Right cardiac atrium (tissue), 5 donors: ENCODE measurements at regions of chr20 and their contacts with region 1.

Region 1: GRCh38 chr20:13105864-13106457 is 97.2 kb downstream of the SPTLC3 start:
- DNase-seq: no peak
- ATAC-seq: no peak
- H3K4me3 ChIP-seq: no peak overlapping the region
- H3K27ac ChIP-seq: no peak overlapping the region
- H3K4me1 ChIP-seq: no peaks in the 10 kb centered on the region
- H3K27me3 ChIP-seq: no peaks in the 10 kb centered on the region

Region 2: DNA sequence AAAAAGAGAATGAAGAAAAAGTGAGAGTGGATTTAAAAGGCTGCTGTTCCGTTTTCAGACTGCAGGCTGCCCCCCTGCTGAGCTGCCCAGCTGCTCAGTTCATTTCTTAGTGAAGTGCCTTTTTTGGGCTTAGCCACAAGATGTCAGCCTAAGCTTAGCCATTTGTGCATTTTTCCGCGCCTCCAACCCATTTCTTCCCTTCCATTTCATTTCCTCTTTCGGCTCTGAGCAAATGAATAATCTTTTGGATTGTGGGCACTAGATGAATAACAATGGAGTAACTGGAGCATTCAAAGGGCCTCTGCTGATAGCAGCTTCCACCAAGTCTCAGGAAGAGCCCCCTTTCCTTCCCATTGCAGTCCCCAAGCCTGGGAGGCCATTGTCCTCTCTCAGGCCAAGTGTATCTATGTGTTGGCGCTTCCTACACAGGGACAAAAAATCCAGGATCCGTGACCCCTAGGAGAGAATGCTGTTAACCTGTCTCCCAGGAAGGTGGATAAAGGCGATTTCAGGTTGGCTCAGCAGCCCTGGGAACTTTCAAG is 180.7 kb before region 1 on chr20:
- intact Hi-C with region 1: loop called in 1 of 4 experiments (anchors 5 kb)
- DNase-seq: peak; percentile 32 to 58 (median 55)
- ATAC-seq: peak; percentile 84 to 88
- H3K4me3 ChIP-seq: no peak overlapping the region
- H3K27ac ChIP-seq: no peak overlapping the region
- H3K4me1 ChIP-seq: no peaks in the 10 kb centered on the region
- H3K27me3 ChIP-seq: no peaks in the 10 kb centered on the region

Region 3: GRCh38 chr20:12970372-12970821 is 135.6 kb before region 1 on chr20:
- intact Hi-C with region 1: loop called (anchors 2 to 10 kb)
- DNase-seq: no peak
- ATAC-seq: peak; percentile 34 to 45
- H3K4me3 ChIP-seq: no peak overlapping the region
- H3K27ac ChIP-seq: no peak overlapping the region
- H3K4me1 ChIP-seq: no peaks in the 10 kb centered on the region
- H3K27me3 ChIP-seq: no peaks in the 10 kb centered on the region

Region 4: GRCh38 chr20:13220904-13221672 is 115.1 kb after region 1 on chr20 and contains the start of gene ISM1:
- intact Hi-C with region 1: no loop called
- DNase-seq: peak in 2 of 3 donors; percentile 20 to 42
- ATAC-seq: peak; percentile 41 to 50
- H3K4me3 ChIP-seq: peak within 1 kb of the TSS; percentile 86
- H3K27ac ChIP-seq: no peak within 1 kb of the TSS
- H3K4me1 ChIP-seq: no peaks in the 10 kb centered on the region
- H3K27me3 ChIP-seq: no peaks in the 10 kb centered on the region
- total RNA-seq, gene ISM1: 0.23 to 3.4 (median 1.1) TPM